Cardiac septum (tissue), 1 donor: ENCODE measurements at regions of chr18 and their contacts with region 1.

Region 1: GRCh38 chr18:46756559-46757201 is at the start of gene ST8SIA5:
- DNase-seq: no peak
- total RNA-seq, gene ST8SIA5: 23.3 TPM

Region 2: DNA sequence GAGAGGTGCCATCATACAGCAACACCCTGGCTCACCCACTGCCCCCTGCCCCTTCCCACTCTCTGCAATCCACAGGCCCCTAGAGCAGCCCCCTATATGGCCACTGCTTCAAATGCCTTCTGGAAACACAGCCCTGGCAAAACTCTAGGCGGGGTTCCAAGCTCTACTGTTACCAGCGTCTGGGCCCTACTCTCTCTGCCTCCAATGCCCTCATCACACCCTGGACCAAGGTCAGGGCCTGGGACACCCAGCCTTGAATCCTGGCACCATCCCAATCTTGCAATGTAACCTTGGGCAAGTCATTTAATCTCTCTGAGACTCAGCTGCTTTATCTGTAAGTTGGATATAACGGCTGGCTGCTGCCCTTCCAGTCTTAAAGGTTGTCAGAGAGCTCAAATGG is 60.4 kb before region 1 on chr18:
- intact Hi-C with region 1: loop called (anchors 5 kb)
- DNase-seq: no peak

Region 3: GRCh38 chr18:46711444-46711863 is 45.2 kb before region 1 on chr18:
- intact Hi-C with region 1: loop called (anchors 5 kb)
- DNase-seq: no peak